RWPE1 (cell line): ENCODE measurements at regions of chr10 and their contacts with region 1.

Region 1: GRCh38 chr10:123149568-123150270 is 1.8 kb downstream of the HMX2 start:
- DNase-seq: no peak
- H3K27ac ChIP-seq: no peak overlapping the region
- CTCF ChIP-seq: no peak

Region 2: GRCh38 chr10:123081896-123082295 is 67.8 kb before region 1 on chr10:
- CTCF ChIA-PET with region 1: no interaction called
- POLR2A ChIA-PET with region 1: no interaction called
- DNase-seq: no peak
- H3K27ac ChIP-seq: no peak overlapping the region
- CTCF ChIP-seq: no peak

Region 3: DNA sequence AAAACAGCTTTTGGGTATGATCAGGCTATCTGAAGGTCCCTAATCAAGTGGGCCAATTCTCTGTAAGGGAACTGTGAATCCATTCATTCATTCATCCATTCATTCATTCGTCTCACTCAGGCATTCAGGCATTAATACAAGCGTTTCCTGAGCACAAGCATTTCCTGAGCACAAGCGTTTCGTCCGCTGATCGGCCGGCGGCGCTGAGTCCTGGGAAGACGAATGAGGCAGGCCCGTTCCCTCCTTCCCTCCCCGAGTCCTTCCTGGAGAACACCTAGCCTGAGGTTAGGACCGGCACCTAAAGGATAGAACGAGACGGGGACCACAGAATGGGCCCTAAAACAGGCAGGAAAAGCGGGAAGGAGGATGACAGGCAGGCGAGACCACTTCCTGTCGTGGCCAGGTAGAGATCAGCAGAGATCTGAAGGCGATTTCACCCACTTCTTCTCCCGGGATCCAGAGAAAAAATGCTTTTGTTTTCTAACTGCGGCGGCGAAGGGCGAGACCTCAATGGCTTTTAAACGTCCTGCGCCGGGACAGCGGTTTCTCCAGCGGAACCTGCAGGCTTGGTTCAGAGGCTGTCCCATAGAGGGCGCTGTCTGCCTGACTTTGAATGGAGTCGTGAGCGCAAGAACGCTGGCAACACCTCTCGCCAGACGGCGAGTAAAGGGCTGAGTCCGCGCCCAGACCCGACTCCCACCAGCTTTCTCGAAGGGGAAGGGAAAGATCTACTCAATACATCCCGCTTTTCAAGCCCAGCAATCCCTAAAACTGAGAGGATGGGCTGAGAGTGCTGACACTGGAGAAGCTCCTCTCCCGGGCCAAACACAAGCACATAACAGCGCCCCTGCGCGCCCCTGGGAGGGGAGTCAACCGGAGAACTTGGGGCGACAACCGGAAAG is 16.9 kb before region 1 on chr10:
- CTCF ChIA-PET with region 1: interaction called, 13 read pairs
- POLR2A ChIA-PET with region 1: no interaction called
- DNase-seq: peak; percentile 90
- H3K27ac ChIP-seq: no peak overlapping the region
- CTCF ChIP-seq: peak; percentile 83